Vagina (tissue), 2 donors: ENCODE measurements at regions of chr22 and their contacts with region 1.

Region 1: DNA sequence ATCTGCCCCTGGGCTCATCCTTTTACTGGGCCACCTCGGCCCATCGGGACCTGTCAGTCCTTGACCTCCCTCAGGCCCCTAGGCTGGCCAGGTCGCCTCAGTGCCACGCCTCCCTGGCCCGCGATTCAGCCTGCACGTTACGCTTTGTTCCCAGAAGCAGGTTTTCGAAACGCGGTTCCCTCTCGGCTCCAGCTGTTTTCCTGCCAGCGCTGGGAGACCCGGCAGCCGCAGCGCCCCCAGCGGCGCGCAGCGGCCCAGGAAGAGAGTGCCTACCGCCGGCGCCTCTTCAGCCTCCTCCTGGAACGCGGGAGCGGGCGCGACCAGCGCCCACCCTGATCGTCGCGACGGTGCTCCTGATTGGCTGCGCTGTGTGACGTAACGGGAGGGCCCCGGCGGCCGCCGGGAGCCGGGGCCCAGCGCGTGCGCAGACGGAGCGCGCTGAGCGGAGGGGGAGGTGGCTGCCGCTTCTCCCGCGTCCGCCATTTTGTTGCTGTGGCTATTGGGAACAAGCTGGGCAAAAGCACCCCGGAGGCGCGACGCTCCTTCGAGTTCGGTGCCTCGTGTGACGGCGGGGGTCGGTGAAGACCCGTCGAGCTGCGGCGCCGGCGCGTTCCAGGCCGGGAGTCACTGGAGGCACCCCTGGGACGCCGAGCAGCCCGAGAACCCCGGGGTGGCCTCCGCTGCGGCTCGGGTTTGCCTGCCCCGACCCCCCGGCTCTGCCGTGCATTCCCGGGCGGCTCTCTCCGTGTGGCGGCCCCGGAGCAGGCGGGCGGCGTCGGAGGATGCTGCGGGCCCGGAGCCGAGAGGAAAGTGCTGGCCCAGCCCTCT is at the start of gene CRKL:
- DNase-seq: peak in 1 of 2 donors; percentile 98
- H3K4me3 ChIP-seq: peak within 1 kb of the TSS; percentile 95 to 98
- H3K27ac ChIP-seq: peak within 1 kb of the TSS; percentile 99
- H3K4me1 ChIP-seq: peaks cover 42% of the 10 kb centered on the region
- H3K27me3 ChIP-seq: no peaks in the 10 kb centered on the region
- CTCF ChIP-seq: peak; percentile 56 to 92 (median 68)
- POLR2A ChIP-seq: peak; percentile 94 to 97
- total RNA-seq, gene CRKL: 37.6 TPM

Region 2: GRCh38 chr22:20507253-20508066 is 409.7 kb before region 1 on chr22 and contains the start of gene MED15:
- intact Hi-C with region 1: loop called (anchors 10 kb)
- DNase-seq: no peak
- H3K4me3 ChIP-seq: peak within 1 kb of the TSS; percentile 84 to 93
- H3K27ac ChIP-seq: peak within 1 kb of the TSS; percentile 94
- H3K4me1 ChIP-seq: peaks cover 38% of the 10 kb centered on the region
- H3K27me3 ChIP-seq: no peaks in the 10 kb centered on the region
- CTCF ChIP-seq: no peak
- POLR2A ChIP-seq: peak in 1 of 2 donors; percentile 84
- total RNA-seq, gene MED15: 72.2 TPM

Region 3: GRCh38 chr22:20858615-20859416 is 58.4 kb before region 1 on chr22 and contains the starts of genes PI4KA and SNAP29:
- intact Hi-C with region 1: loop called (anchors 5 kb)
- DNase-seq: peak in 1 of 2 donors; percentile 98
- H3K4me3 ChIP-seq: peak within 1 kb of the TSS; percentile 72 to 79
- H3K27ac ChIP-seq: peak within 1 kb of the TSS; percentile 85
- H3K4me1 ChIP-seq: peaks cover 76% of the 10 kb centered on the region
- H3K27me3 ChIP-seq: no peaks in the 10 kb centered on the region
- CTCF ChIP-seq: no peak
- POLR2A ChIP-seq: peak; percentile 50 to 87
- total RNA-seq, gene PI4KA: 135 TPM
- total RNA-seq, gene SNAP29: 18.9 TPM

Region 4: GRCh38 chr22:21688706-21689381 is 771.6 kb after region 1 on chr22:
- intact Hi-C with region 1: no loop called
- DNase-seq: no peak
- H3K4me3 ChIP-seq: no peak overlapping the region
- H3K27ac ChIP-seq: no peak overlapping the region
- H3K4me1 ChIP-seq: no peaks in the 10 kb centered on the region
- H3K27me3 ChIP-seq: no peaks in the 10 kb centered on the region
- CTCF ChIP-seq: no peak
- POLR2A ChIP-seq: no peak